ENCODE measurements at regions of chr1 and their contacts with region 1.

Region 1: GRCh38 chr1:207963427-207964194 is 52.7 kb upstream of the CD34 start:
- DNase-seq: peak; percentile 67 to 93 (median 82)
- ATAC-seq: peak; percentile 91
- H3K4me3 ChIP-seq: peak overlapping the region; percentile 71 to 92
- H3K4me3 Mint-ChIP-seq: peak overlapping the region; percentile 85
- H3K27ac ChIP-seq: peak overlapping the region; percentile 28 to 73
- H3K27ac Mint-ChIP-seq: peak overlapping the region; percentile 55
- H3K4me1 ChIP-seq: peaks cover 8% of the 10 kb centered on the region
- H3K4me1 Mint-ChIP-seq: peaks cover 12% of the 10 kb centered on the region
- H3K27me3 ChIP-seq: peaks cover 4 to 12% of the 10 kb centered on the region in 2 experiments
- H3K27me3 Mint-ChIP-seq: peaks cover 17% of the 10 kb centered on the region
- CTCF ChIP-seq: peak; percentile 99

Region 2: DNA sequence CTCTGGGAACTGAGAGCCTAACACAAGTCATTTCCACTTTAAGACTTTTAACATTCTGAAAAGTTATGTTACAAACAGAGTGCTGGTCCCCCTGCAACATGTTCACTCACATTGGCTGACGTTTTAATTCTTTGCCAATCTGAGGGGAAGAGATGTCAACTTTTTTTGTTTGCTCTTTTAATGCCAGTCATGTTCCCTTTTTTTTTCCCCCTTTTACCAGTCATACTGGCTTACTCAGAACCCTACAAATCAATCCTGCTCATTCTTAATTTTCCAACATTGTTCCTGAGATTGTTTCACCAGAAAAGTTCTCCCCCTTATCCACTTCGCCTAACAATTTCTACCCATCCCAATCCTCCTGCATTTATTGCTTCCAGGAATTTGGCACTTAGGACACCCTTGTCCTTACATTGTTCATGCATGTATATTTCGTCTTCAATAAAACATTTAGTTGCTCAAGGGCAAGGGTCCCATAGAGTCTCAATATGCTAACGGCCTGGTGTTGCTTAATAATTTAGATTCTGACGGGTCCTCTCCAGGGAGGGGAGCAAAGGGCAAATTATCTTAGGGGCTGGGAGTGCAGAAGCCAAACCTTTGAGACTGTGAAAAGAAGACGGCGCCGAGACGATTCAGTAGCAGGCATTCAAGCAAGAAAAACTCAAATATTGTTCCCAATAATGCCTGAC is 319.3 kb before region 1 on chr1:
- CTCF ChIA-PET with region 1: no interaction called
- POLR2A ChIA-PET with region 1: no interaction called
- intact Hi-C with region 1: no loop called
- DNase-seq: peak in 1 of 9 experiments; percentile 4
- ATAC-seq: no peak
- H3K4me3 ChIP-seq: peak overlapping the region; percentile 52 to 77
- H3K4me3 Mint-ChIP-seq: peak overlapping the region; percentile 79
- H3K27ac ChIP-seq: no peak overlapping the region
- H3K27ac Mint-ChIP-seq: no peak overlapping the region
- H3K4me1 ChIP-seq: no peaks in the 10 kb centered on the region
- H3K4me1 Mint-ChIP-seq: peaks cover 8% of the 10 kb centered on the region
- H3K27me3 ChIP-seq: peaks cover 0 to 7% of the 10 kb centered on the region in 2 experiments
- H3K27me3 Mint-ChIP-seq: peaks cover 26% of the 10 kb centered on the region
- CTCF ChIP-seq: no peak

Region 3: DNA sequence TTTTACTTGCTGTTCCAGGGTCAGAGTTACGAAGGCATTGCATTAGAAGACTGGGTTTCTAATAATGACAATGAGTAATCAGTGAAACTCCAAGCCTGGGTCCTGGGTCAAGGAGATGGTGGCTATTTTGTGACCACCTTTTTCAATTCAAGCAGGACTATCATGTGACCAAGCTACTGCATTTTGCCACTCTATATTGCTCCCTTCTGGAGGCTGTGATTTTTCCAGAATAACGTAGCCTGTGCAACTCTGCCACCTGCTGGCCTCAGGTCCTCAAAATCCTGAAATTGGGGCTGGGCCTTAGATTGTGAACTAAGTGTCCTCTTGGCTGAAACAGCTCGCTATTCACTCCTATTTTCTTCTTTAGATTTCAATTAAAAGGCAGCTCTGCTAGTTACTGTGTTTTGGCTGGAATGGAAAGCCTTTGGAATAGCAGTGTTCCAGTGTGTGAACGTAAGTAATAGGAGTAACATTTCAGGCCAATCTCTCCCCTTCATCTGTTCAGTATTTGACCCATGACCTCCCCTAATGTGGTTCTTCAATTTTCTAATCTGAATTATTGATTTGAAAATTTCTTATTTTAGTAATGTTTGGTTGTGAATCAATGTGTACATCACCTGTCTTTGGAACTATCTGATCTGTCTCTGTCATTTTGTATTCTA is 264.7 kb before region 1 on chr1:
- CTCF ChIA-PET with region 1: no interaction called
- POLR2A ChIA-PET with region 1: no interaction called
- intact Hi-C with region 1: loop called in 1 of 2 experiments (anchors 1 kb)
- DNase-seq: peak in 8 of 9 experiments; percentile 4 to 62 (median 30)
- ATAC-seq: peak; percentile 51
- H3K4me3 ChIP-seq: no peak overlapping the region
- H3K4me3 Mint-ChIP-seq: no peak overlapping the region
- H3K27ac ChIP-seq: no peak overlapping the region
- H3K27ac Mint-ChIP-seq: no peak overlapping the region
- H3K4me1 ChIP-seq: no peaks in the 10 kb centered on the region
- H3K4me1 Mint-ChIP-seq: no peaks in the 10 kb centered on the region
- H3K27me3 ChIP-seq: no peaks in the 10 kb centered on the region
- H3K27me3 Mint-ChIP-seq: peaks cover 5% of the 10 kb centered on the region
- CTCF ChIP-seq: peak; percentile 39

Region 4: DNA sequence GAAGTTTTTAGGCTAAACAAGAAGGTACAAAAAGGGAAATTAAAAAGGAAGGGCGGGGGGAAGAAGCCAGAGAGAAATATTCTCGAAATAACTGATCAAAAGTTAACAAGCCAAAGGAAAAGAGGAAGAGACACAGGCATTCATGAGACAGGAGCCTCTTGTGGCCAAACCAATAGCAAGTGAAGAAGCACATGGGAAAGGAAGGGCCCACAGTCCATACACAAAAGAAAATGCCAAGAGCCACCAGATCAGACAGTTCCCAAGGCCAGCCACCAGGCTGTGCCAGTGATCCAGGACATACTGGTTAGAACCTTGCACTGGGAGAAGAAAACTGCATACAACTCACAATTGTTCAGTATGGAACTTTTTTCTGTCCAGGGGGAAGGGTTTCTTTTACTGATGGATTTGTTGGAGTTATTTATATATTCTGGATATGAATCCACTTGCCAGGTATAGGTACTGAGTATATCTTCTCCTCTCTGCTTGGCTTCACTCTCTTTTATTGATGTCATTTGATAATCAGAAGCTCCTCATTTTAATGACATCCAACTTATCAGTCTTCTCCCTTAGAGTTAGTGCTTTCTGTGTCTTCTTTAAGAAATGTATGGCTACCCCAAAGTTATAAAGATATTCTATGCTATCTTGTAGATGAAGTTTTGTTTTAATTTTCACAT is 135.0 kb before region 1 on chr1:
- CTCF ChIA-PET with region 1: interaction called, 70 read pairs
- POLR2A ChIA-PET with region 1: interaction called, 8 read pairs
- intact Hi-C with region 1: loop called (anchors 1 kb)
- DNase-seq: peak in 8 of 9 experiments; percentile 35 to 83 (median 64)
- ATAC-seq: peak; percentile 19
- H3K4me3 ChIP-seq: no peak overlapping the region
- H3K4me3 Mint-ChIP-seq: no peak overlapping the region
- H3K27ac ChIP-seq: peak overlapping the region in 1 of 2 experiments; percentile 29
- H3K27ac Mint-ChIP-seq: peak overlapping the region; percentile 47
- H3K4me1 ChIP-seq: peaks cover 76% of the 10 kb centered on the region
- H3K4me1 Mint-ChIP-seq: peaks cover 94% of the 10 kb centered on the region
- H3K27me3 ChIP-seq: no peaks in the 10 kb centered on the region
- H3K27me3 Mint-ChIP-seq: no peaks in the 10 kb centered on the region
- CTCF ChIP-seq: peak; percentile 78

Region 5: GRCh38 chr1:207885129-207886032 is 78.2 kb before region 1 on chr1:
- CTCF ChIA-PET with region 1: interaction called, 86 read pairs
- POLR2A ChIA-PET with region 1: interaction called, 12 read pairs
- intact Hi-C with region 1: loop called (anchors 1 kb)
- DNase-seq: peak; percentile 43 to 87 (median 68)
- ATAC-seq: peak; percentile 74
- H3K4me3 ChIP-seq: no peak overlapping the region
- H3K4me3 Mint-ChIP-seq: peak overlapping the region; percentile 20
- H3K27ac ChIP-seq: no peak overlapping the region
- H3K27ac Mint-ChIP-seq: peak overlapping the region; percentile 96
- H3K4me1 ChIP-seq: peaks cover 26% of the 10 kb centered on the region
- H3K4me1 Mint-ChIP-seq: peaks cover 37% of the 10 kb centered on the region
- H3K27me3 ChIP-seq: no peaks in the 10 kb centered on the region
- H3K27me3 Mint-ChIP-seq: peaks cover 3% of the 10 kb centered on the region
- CTCF ChIP-seq: peak; percentile 86

Region 6: DNA sequence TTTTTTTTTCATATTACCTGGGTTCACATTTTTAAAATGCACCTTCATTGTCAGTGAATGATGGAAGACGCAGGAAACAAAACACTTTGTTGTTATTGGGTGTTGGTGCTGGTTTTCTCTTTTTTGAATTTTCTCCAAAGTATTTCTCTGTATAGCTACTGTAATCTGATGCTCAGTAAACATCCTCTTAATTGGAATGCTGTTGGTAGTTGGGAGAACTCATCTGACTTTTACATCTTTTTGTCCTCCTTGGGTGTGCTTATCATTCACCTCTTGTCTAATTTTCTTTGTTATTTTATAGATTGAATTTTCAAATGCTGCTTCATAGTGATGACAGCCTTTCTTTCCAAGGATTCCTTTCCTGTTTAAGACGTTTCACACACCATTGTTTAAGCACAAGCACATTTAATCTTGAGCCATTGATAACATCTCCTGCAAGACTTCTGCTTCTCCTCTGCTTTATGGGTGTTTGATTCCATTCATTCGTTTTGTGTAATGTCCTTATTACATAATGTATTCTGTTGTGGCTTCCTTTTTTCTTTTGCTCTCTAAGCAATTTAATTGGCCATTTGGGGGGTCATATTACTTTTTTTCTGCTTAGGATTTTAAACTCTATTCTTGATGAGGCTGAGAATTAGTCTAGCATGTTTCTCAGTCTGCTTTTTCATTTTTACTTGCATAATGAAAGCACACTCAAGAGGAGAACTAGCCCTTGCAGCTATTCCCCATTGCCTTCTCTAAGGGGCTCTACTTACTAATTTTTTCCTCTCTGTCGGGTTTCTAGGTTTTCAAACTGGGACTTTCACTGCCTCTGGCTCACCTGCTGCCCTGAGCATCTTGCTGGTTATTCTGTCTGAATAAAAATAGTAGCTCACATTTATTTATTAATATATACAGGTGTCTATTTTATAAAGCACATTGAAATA is 10.7 kb before region 1 on chr1:
- CTCF ChIA-PET with region 1: interaction called, 25 read pairs
- POLR2A ChIA-PET with region 1: no interaction called
- intact Hi-C with region 1: no loop called
- DNase-seq: no peak
- ATAC-seq: no peak
- H3K4me3 ChIP-seq: no peak overlapping the region
- H3K4me3 Mint-ChIP-seq: no peak overlapping the region
- H3K27ac ChIP-seq: no peak overlapping the region
- H3K27ac Mint-ChIP-seq: no peak overlapping the region
- H3K4me1 ChIP-seq: no peaks in the 10 kb centered on the region
- H3K4me1 Mint-ChIP-seq: no peaks in the 10 kb centered on the region
- H3K27me3 ChIP-seq: no peaks in the 10 kb centered on the region
- H3K27me3 Mint-ChIP-seq: peaks cover 27% of the 10 kb centered on the region
- CTCF ChIP-seq: no peak

Measured in CD8-positive, alpha-beta T cell (primary cell).